ENCODE measurements at regions of chr1 and their contacts with region 1.

Region 1: GRCh38 chr1:115609021-115609420 is 32.7 kb upstream of the VANGL1 start:
- DNase-seq: no peak
- H3K4me3 ChIP-seq: no peak overlapping the region
- H3K27ac ChIP-seq: no peak overlapping the region
- H3K4me1 ChIP-seq: no peaks in the 10 kb centered on the region
- H3K27me3 ChIP-seq: no peaks in the 10 kb centered on the region

Region 2: DNA sequence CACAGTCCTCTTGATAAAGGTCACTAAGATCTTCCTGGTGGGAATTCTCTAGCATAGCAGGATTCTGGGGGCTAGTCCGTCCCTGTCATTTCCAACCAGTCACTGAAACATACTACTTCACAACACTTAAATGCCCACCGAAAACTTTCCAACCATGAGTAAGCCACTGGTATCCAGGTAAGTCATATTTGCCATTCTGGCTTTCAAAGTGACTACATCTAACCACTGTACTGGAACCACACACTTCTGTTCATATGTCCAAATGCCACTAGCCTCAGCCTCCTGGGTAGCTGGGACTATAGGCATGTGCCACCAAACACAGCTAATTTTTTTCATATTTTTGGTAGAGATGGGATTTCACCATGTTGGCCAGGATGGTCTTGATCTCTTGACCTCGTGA is 31.5 kb before region 1 on chr1:
- CTCF ChIA-PET with region 1: no interaction called
- POLR2A ChIA-PET with region 1: no interaction called
- DNase-seq: no peak
- H3K4me3 ChIP-seq: no peak overlapping the region
- H3K27ac ChIP-seq: no peak overlapping the region
- H3K4me1 ChIP-seq: no peaks in the 10 kb centered on the region
- H3K27me3 ChIP-seq: no peaks in the 10 kb centered on the region

Region 3: DNA sequence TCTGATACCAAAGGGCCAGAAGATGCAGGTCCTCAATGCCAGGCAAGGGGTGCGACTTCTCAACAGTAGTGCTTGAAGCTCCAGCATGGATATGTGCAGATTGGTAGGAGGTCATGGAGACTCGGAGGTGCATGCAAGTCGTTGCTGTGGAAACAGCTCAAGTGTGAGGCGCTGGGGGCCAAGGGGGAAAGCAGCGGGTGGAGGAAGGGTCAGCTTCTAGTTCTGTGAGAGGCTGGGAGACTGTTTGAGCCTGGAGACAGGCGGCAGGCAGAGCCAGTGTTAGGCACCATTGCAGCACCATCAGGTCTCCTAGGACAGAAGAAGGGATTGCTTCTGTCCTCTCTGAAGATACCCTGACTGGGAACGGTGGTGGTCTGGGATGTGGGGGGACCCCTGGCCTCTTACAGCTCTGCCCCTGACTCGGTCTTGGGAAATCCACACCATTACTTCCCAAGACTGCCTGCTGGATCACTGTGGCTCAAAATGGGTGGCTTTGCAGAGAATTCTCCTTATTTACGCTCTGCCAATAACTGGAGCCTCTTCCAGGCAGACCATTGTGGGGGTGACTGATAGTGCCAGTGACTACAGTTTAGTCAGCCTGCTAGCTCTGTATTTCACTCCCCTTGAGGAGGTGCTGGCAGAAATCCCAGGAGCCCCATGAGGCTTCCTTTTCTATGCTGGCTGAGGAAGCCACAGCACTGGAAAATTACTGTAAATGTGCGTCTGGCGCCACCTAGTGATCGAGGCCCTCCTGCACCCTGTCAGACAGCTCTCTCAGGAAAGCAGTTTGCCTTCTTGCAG is 13.5 kb before region 1 on chr1:
- CTCF ChIA-PET with region 1: interaction called, 15 read pairs
- POLR2A ChIA-PET with region 1: interaction called, 4 read pairs
- DNase-seq: peak; percentile 72 to 86 (median 80)
- H3K4me3 ChIP-seq: no peak overlapping the region
- H3K27ac ChIP-seq: no peak overlapping the region
- H3K4me1 ChIP-seq: peaks cover 0 to 4% (median 0%) of the 10 kb centered on the region in 4 experiments
- H3K27me3 ChIP-seq: no peaks in the 10 kb centered on the region

Region 4: DNA sequence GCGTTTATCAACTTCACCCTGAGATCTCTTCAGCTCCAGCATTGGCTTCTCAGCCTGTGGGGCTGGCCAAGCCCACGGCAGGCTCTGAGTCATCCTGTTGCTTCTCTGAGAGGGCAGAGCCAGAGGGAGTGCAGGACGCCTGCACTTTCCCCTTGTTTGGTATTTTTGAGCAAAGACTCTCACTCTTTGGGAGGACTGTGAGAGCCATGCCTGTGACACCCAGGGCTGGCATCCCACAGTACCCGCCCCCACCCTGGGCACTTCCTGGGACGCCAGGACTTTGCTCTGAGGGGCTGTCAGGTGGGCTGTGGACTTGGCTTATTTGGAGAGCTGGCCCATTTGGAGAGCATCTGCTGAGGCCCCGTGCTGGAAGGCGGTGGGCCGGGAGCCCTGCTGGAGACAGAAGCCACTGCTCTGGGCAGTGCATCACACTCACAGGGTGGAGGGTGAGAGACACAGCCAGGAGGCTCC is 70.2 kb after region 1 on chr1:
- CTCF ChIA-PET with region 1: interaction called, 17 read pairs
- POLR2A ChIA-PET with region 1: interaction called, 3 read pairs
- DNase-seq: peak in 1 of 3 donors; percentile 12
- H3K4me3 ChIP-seq: no peak overlapping the region
- H3K27ac ChIP-seq: peak overlapping the region in 1 of 2 experiments; percentile 1
- H3K4me1 ChIP-seq: peaks cover 0 to 15% (median 12%) of the 10 kb centered on the region in 4 experiments
- H3K27me3 ChIP-seq: no peaks in the 10 kb centered on the region

Region 5: DNA sequence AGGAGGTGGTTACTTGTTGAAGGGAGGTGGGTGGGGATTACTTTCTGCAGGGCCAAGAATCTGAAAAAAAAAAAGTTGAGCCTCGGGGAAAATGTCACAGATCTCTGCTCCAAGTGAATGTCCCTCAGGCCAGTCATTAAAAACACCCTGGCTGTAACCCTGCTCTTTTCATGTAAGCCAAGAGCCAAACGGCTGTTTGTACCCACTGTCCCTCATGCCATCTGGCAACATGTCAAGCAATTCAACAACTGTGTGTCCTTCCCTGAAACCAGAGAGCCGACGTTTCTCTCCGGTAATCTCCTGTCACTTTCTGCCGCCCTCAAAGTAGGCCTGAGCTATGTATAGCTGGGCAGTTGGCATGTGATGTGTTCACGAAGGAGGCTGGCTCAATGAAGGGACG is 144.8 kb after region 1 on chr1:
- CTCF ChIA-PET with region 1: no interaction called
- POLR2A ChIA-PET with region 1: no interaction called
- DNase-seq: no peak
- H3K4me3 ChIP-seq: no peak overlapping the region
- H3K27ac ChIP-seq: no peak overlapping the region
- H3K4me1 ChIP-seq: no peaks in the 10 kb centered on the region
- H3K27me3 ChIP-seq: peaks cover 0 to 3% (median 0%) of the 10 kb centered on the region in 5 experiments

Region 6: DNA sequence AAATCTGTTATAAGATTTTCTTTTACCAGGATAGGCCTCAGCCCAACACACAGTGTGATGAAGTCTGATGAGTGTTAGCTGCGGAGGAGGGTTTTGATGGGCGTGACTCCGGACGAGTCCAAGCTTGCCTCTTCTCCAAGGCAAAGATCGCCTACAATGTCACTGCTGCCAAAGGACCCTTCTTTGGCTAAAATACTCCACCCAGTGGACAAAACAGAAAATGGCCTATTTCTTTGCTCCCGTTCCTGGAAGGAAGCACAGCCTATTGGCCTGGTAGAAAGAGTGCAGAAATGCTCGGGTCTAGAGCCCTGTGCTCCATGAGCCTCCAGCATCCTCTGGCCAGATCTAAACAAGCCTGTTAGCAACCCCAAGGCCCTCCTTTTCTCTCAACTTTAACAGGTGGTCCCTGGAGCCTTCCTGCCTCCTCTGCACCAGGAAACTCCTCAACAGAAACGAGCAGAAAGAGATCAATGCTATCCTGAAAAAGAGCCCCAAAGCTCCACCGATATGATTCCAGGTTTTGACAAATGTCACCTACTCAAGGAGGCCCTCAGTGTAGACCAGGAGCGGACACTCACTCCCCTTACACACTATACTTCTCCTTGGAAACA is 162.9 kb after region 1 on chr1:
- CTCF ChIA-PET with region 1: interaction called, 13 read pairs
- POLR2A ChIA-PET with region 1: no interaction called
- DNase-seq: peak; percentile 67 to 79 (median 75)
- H3K4me3 ChIP-seq: peak overlapping the region in 3 of 7 experiments; percentile 44 to 65 (median 48)
- H3K27ac ChIP-seq: no peak overlapping the region
- H3K4me1 ChIP-seq: peaks cover 0 to 3% (median 0%) of the 10 kb centered on the region in 4 experiments
- H3K27me3 ChIP-seq: peaks cover 0 to 4% (median 0%) of the 10 kb centered on the region in 5 experiments

Region 7: DNA sequence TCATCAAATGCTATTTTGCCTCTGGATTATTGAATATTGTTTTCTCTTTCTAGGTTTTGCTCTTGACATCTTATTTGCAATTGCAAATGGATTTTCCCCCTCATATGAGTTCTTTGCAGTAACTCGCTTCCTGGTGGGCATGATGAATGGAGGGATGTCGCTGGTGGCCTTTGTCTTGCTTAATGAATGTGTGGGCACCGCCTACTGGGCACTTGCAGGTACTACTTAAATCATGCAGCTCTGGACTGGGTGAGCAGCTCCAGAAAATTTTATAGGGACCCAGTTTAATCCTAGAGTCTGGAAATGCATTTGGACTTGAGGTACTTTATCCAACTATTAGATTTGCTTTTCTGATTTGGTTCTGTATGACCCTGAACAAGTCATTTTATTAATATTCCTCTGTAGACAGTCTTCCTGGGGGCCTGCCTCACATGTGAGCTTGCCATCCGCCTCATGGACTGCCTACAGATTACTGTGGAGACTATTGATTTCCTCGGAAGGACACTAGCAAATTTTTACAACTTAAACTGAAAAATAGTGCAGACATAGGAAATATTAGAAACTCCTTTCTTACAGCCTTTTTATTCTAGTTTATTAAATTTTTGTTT is 411.8 kb after region 1 on chr1:
- CTCF ChIA-PET with region 1: no interaction called
- POLR2A ChIA-PET with region 1: no interaction called
- DNase-seq: peak; percentile 78 to 89 (median 88)
- H3K4me3 ChIP-seq: no peak overlapping the region
- H3K27ac ChIP-seq: no peak overlapping the region
- H3K4me1 ChIP-seq: peaks cover 0 to 4% (median 3%) of the 10 kb centered on the region in 4 experiments
- H3K27me3 ChIP-seq: no peaks in the 10 kb centered on the region

Measured in common myeloid progenitor, CD34-positive (primary cell).